ENCODE measurements at regions of chr2 and their contacts with region 1.

Region 1: GRCh38 chr2:156400706-156401678 is 35.2 kb upstream of the GPD2 start:
- DNase-seq: peak; percentile 91
- H3K4me3 ChIP-seq: peak overlapping the region; percentile 48 to 71 (median 49)
- H3K27ac ChIP-seq: peak overlapping the region; percentile 41
- H3K4me1 ChIP-seq: peaks cover 5% of the 10 kb centered on the region
- H3K27me3 ChIP-seq: peaks cover 0 to 5% of the 10 kb centered on the region in 2 experiments
- CTCF ChIP-seq: no peak
- POLR2A ChIP-seq: no peak

Region 2: DNA sequence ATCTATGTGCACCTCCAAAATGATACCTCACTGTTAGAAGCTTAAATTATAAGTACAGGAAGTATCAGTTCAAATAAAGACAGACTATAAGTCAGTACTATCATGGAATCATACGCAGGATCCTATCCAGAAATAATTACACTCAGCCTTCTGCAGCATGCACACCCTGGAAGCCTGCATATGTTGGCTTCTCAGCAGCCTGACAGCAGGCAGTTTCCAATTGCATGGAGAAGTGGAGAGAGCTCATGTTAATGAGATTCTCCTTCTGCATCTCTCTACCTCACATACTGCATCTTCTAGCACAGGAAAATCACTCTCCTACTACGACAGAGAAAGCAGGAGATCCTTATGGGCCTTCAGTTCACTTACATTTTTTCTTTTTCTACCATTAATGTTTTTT is 89.0 kb before region 1 on chr2:
- CTCF ChIA-PET with region 1: no interaction called
- POLR2A ChIA-PET with region 1: no interaction called
- dilution Hi-C with region 1: no loop called
- intact Hi-C with region 1: no loop called
- DNase-seq: no peak
- H3K4me3 ChIP-seq: no peak overlapping the region
- H3K27ac ChIP-seq: no peak overlapping the region
- H3K4me1 ChIP-seq: no peaks in the 10 kb centered on the region
- H3K27me3 ChIP-seq: peaks cover 2 to 24% of the 10 kb centered on the region in 2 experiments
- CTCF ChIP-seq: no peak
- POLR2A ChIP-seq: no peak

Region 3: GRCh38 chr2:156341452-156342253 is 59.3 kb before region 1 on chr2:
- CTCF ChIA-PET with region 1: interaction called, 3 read pairs
- POLR2A ChIA-PET with region 1: interaction called, 9 read pairs
- dilution Hi-C with region 1: no loop called
- intact Hi-C with region 1: loop called (anchors 1 kb)
- DNase-seq: peak; percentile 83
- H3K4me3 ChIP-seq: peak overlapping the region; percentile 69 to 97 (median 87)
- H3K27ac ChIP-seq: peak overlapping the region; percentile 100
- H3K4me1 ChIP-seq: peaks cover 11% of the 10 kb centered on the region
- H3K27me3 ChIP-seq: no peaks in the 10 kb centered on the region
- CTCF ChIP-seq: no peak
- POLR2A ChIP-seq: peak; percentile 35

Region 4: DNA sequence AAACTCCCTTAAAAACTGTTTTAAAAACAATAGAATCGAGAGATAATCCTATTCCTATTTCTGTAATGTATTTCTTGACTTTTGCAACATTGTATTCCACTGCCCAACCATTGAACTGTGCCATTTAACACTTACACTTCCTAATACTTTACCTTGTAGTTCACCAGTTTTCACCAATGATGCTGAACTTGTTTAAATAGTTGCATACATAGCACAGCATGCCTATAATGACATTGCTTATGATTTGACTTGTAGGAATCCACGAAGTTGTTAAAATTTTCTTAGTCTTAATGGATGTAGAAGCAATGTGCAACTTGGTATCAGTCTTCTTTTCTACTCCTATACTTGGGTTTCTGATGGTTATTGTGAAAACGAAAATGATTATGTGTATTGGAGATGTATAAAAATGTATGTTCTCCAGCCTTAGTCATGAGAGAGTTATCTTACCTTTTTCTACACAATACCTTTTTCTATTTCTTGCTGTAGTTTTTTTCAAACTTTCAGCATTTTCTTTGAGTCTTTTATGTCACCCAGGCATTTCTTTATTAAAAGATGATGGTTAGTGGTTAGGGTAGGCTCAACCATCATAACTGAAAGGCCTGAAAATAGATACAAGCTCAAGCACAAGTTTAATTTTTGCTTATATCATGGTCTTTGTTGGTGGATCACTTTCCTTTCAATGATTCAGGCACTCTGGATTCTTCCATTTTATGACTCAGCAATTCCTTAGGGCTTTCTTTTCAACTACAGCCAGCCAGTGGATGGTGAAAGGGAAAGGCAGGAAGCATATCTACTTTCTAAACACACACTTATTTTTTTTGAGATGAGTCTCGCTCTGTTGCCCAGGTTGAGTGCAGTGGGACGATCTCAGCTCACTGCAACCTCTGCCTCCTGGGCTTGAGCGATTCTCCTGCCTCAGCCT is 44.6 kb after region 1 on chr2:
- CTCF ChIA-PET with region 1: no interaction called
- POLR2A ChIA-PET with region 1: no interaction called
- dilution Hi-C with region 1: no loop called
- intact Hi-C with region 1: no loop called
- DNase-seq: peak; percentile 69
- H3K4me3 ChIP-seq: no peak overlapping the region
- H3K27ac ChIP-seq: no peak overlapping the region
- H3K4me1 ChIP-seq: peaks cover 6% of the 10 kb centered on the region
- H3K27me3 ChIP-seq: no peaks in the 10 kb centered on the region
- CTCF ChIP-seq: no peak
- POLR2A ChIP-seq: no peak

Region 5: DNA sequence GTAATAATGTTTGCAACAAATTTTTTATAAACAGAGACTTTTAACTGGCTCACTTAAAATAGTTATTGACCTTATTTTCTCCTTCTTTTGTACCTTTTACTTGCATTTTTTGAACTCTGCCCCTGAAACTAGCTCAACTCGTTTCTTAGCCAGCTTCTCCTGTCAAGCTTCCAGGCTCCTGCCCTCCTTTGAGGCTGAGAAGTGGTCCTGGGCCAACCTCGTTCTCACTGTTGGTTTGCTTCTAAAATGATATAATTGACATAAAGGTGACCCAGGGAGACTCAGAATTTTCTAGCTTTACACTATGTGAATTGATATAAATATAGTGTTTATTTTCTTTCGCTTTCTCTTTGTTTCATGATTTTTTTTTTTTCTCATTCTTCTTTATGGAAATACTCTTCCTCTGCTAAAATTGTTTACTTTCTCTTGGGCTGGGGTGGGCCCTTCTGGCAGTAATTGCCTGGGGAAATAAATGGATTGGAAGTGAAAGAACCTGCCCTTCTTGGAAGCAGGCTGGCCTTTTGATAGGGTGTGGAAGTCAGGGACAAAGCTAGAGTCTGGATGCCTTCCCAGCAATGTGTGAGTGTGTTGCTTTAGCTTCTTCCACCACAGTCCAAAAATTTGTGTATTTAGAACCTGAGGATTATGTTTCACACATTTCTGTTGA is 65.9 kb after region 1 on chr2:
- CTCF ChIA-PET with region 1: interaction called, 4 read pairs
- POLR2A ChIA-PET with region 1: no interaction called
- dilution Hi-C with region 1: no loop called
- intact Hi-C with region 1: loop called (anchors 2 kb)
- DNase-seq: peak; percentile 60
- H3K4me3 ChIP-seq: peak overlapping the region in 1 of 3 experiments; percentile 16
- H3K27ac ChIP-seq: no peak overlapping the region
- H3K4me1 ChIP-seq: peaks cover 27% of the 10 kb centered on the region
- H3K27me3 ChIP-seq: no peaks in the 10 kb centered on the region
- CTCF ChIP-seq: no peak
- POLR2A ChIP-seq: no peak